Activated CD8-positive, alpha-beta T cell treated with anti-CD3 and anti-CD28 coated beads, Interleukin-2, amount 10 ng/mL, durations not matched to agents 7 days and 5 days (primary cell): ENCODE measurements at regions of chr9 and their contacts with region 1.

Region 1: GRCh38 chr9:133149126-133150107 is 14.3 kb downstream of the GBGT1 start:
- DNase-seq: peak; percentile 84
- ATAC-seq: peak; percentile 66
- H3K4me3 Mint-ChIP-seq: peak overlapping the region; percentile 72
- H3K27ac Mint-ChIP-seq: peak overlapping the region; percentile 81
- H3K4me1 Mint-ChIP-seq: peaks cover 47% of the 10 kb centered on the region
- H3K27me3 Mint-ChIP-seq: no peaks in the 10 kb centered on the region

Region 2: GRCh38 chr9:132957805-132958204 is 191.6 kb before region 1 on chr9:
- CTCF ChIA-PET with region 1: no interaction called
- POLR2A ChIA-PET with region 1: no interaction called
- DNase-seq: no peak
- ATAC-seq: no peak
- H3K4me3 Mint-ChIP-seq: no peak overlapping the region
- H3K27ac Mint-ChIP-seq: no peak overlapping the region
- H3K4me1 Mint-ChIP-seq: no peaks in the 10 kb centered on the region
- H3K27me3 Mint-ChIP-seq: peaks cover 2% of the 10 kb centered on the region

Region 3: GRCh38 chr9:133023117-133023890 is 126.1 kb before region 1 on chr9:
- CTCF ChIA-PET with region 1: interaction called, 97 read pairs
- POLR2A ChIA-PET with region 1: interaction called, 4 read pairs
- DNase-seq: peak; percentile 79
- ATAC-seq: peak; percentile 69
- H3K4me3 Mint-ChIP-seq: peak overlapping the region; percentile 22
- H3K27ac Mint-ChIP-seq: peak overlapping the region; percentile 43
- H3K4me1 Mint-ChIP-seq: peaks cover 22% of the 10 kb centered on the region
- H3K27me3 Mint-ChIP-seq: peaks cover 3% of the 10 kb centered on the region

Region 4: DNA sequence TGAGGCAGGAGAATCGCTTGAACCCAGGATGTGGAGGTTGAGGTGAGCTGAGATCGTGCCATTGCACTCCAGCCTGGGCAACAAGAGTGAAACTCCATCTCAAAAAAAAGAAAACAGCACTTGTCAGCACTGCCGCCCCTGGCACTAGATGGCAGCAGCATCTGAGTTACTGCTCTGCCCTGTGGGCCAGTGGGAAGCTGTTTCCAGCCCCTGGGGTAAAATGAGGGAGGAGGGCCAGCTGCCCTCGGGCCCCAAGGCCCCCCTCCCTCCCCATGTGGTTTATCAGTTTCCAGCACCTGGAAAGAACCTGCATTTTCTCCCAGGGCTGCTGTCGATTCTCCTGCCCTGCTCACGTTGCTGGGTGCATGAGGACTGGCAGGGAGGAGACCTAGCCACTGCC is 100.8 kb before region 1 on chr9:
- CTCF ChIA-PET with region 1: interaction called, 52 read pairs
- POLR2A ChIA-PET with region 1: no interaction called
- DNase-seq: peak; percentile 54
- ATAC-seq: peak; percentile 84
- H3K4me3 Mint-ChIP-seq: no peak overlapping the region
- H3K27ac Mint-ChIP-seq: no peak overlapping the region
- H3K4me1 Mint-ChIP-seq: peaks cover 12% of the 10 kb centered on the region
- H3K27me3 Mint-ChIP-seq: no peaks in the 10 kb centered on the region

Region 5: DNA sequence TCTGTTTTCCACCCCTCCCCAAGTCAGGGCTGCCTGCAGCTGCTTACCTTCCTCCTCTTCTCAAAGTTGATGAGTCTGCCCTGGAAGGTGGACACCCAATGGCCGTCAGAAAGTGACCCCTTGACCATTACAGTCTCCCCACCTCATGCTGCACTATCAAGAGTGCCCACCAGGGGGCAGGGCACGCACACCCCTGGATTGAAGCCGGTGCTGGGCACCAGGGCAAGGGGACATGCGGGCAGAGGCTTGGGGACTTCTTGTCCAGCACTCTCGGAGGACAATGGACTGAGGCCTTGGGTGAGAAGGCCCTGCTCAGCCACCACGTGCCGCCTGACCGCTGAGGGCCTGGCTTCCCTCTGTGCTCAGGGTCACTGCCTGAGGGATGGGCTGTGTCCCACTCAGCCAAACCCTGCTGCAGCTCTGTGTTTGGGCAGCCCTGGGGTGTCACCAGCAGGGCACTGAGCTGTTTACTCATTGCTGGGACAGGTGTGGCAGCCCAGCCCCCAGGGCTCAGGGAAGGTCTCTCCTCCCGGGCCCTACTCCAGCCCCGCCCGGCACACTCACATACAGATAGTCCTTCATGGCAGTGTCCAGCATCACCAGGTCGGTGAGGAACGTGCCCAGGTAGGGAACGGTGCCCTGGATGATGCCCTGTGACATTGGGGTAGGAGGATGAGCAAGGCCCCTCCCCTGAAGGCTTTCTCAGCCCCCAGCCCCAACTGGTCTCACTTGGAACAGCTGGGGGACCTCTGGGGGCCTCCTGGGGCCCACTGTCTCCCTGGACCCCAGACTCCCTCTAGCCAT is 46.0 kb before region 1 on chr9:
- CTCF ChIA-PET with region 1: interaction called, 421 read pairs
- POLR2A ChIA-PET with region 1: interaction called, 13 read pairs
- DNase-seq: peak; percentile 60
- ATAC-seq: peak; percentile 67
- H3K4me3 Mint-ChIP-seq: no peak overlapping the region
- H3K27ac Mint-ChIP-seq: peak overlapping the region; percentile 77
- H3K4me1 Mint-ChIP-seq: peaks cover 5% of the 10 kb centered on the region
- H3K27me3 Mint-ChIP-seq: no peaks in the 10 kb centered on the region

Region 6: DNA sequence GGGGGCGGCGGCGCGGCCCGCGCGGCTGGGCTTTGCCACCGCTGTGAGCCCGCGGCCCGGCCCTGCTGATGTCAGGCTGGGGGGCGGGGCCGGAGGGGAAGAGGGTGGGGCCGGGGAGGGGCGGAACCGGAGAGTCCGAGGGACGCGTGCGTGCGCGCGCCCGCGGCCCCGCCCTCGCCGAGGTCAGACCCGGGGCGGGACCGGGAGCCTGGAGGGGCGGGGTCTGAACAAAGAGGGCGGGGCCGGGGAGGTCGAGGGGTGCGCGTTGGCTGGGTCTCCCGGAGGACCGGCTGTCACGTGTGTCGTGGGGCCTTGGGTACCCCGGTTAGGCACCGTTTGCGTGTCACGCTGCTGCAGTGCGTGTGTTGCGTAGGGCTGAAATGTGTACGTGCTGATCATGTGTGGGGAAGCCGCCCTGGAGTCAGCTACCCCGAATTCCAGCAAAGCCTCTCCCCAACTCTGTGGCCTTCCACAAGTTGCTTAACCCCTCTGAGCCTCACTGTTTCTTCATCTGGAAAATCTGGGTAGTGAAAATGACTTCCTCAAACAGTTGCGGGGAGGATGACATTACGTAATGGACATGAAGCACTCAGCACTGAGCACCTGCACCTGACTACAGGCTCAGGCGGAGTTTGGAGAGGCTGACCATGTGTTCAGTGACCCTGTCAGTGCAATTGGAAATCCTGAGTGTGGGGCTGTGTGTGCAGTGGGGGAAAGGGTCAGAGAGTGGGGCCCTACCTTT is 28.0 kb before region 1 on chr9 and contains the start of gene RALGDS:
- CTCF ChIA-PET with region 1: interaction called, 421 read pairs
- POLR2A ChIA-PET with region 1: interaction called, 14 read pairs
- DNase-seq: peak; percentile 90
- ATAC-seq: peak; percentile 78
- H3K4me3 Mint-ChIP-seq: peak within 1 kb of the TSS; percentile 76
- H3K27ac Mint-ChIP-seq: peak within 1 kb of the TSS; percentile 90
- H3K4me1 Mint-ChIP-seq: peaks cover 79% of the 10 kb centered on the region
- H3K27me3 Mint-ChIP-seq: no peaks in the 10 kb centered on the region
- total RNA-seq, gene RALGDS: 85.7 to 102 TPM